Activated CD8-positive, alpha-beta T cell treated with anti-CD3 and anti-CD28 coated beads for 36 hours (primary cell): ENCODE measurements at regions of chr12 and their contacts with region 1.

Region 1: DNA sequence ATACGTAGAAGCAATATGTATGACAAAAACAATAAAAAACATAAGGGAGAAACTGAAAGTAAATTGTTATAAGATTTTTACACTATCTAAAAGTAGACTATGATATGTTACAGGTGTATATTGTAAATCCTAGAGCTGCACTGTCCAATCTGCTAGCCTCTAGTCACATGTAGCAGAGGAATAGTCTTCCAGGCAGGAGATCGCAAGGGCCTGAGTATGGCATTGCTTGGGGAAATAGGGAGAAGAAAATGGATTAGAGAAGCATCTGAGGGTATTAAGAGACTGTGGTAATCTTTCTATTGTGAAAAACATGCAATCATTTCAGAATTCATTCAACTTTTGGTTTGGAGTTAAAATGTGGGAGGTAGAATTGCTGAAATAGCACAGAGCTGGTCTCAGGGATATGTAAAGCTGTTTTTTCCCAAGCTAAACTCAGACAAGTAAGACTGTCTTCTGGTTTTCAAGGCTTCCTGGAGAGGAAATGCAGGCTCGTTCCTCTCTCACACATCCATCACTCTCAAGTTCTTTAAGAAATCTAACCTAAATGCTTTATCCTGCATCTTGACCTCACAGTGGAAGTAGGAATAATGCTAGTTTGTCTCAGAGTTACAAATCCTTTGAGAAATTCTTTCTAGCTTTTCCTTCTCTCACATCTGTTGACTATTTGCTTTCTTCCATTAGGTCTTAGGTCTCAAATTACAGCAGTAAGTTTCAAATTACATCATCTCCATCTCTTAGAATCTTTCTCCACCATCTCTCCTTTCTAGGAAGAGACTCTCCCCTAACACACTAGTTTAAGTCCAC is 7.6 kb upstream of the CCDC184 start:
- DNase-seq: no peak
- ATAC-seq: no peak
- H3K4me3 Mint-ChIP-seq: no peak overlapping the region
- H3K27ac Mint-ChIP-seq: no peak overlapping the region
- H3K4me1 Mint-ChIP-seq: peaks cover 9% of the 10 kb centered on the region
- H3K27me3 Mint-ChIP-seq: peaks cover 8% of the 10 kb centered on the region
- CTCF ChIP-seq: no peak

Region 2: GRCh38 chr12:48165094-48165981 is 10.5 kb before region 1 on chr12:
- CTCF ChIA-PET with region 1: interaction called, 14 read pairs
- POLR2A ChIA-PET with region 1: interaction called, 3 read pairs
- intact Hi-C with region 1: no loop called
- DNase-seq: peak; percentile 33
- ATAC-seq: peak; percentile 81
- H3K4me3 Mint-ChIP-seq: no peak overlapping the region
- H3K27ac Mint-ChIP-seq: no peak overlapping the region
- H3K4me1 Mint-ChIP-seq: peaks cover 5% of the 10 kb centered on the region
- H3K27me3 Mint-ChIP-seq: peaks cover 5% of the 10 kb centered on the region
- CTCF ChIP-seq: peak; percentile 94

Region 3: GRCh38 chr12:48189331-48190125 is 13.7 kb after region 1 on chr12:
- CTCF ChIA-PET with region 1: interaction called, 35 read pairs
- POLR2A ChIA-PET with region 1: interaction called, 3 read pairs
- intact Hi-C with region 1: no loop called
- DNase-seq: peak; percentile 86
- ATAC-seq: peak; percentile 89
- H3K4me3 Mint-ChIP-seq: no peak overlapping the region
- H3K27ac Mint-ChIP-seq: no peak overlapping the region
- H3K4me1 Mint-ChIP-seq: peaks cover 6% of the 10 kb centered on the region
- H3K27me3 Mint-ChIP-seq: peaks cover 23% of the 10 kb centered on the region
- CTCF ChIP-seq: peak; percentile 91

Region 4: GRCh38 chr12:48197971-48198671 is 22.3 kb after region 1 on chr12:
- CTCF ChIA-PET with region 1: interaction called, 21 read pairs
- POLR2A ChIA-PET with region 1: interaction called, 3 read pairs
- intact Hi-C with region 1: no loop called
- DNase-seq: peak; percentile 98
- ATAC-seq: peak; percentile 98
- H3K4me3 Mint-ChIP-seq: peak overlapping the region; percentile 84
- H3K27ac Mint-ChIP-seq: peak overlapping the region; percentile 98
- H3K4me1 Mint-ChIP-seq: peaks cover 19% of the 10 kb centered on the region
- H3K27me3 Mint-ChIP-seq: peaks cover 3% of the 10 kb centered on the region
- CTCF ChIP-seq: no peak